ENCODE measurements at regions of chr1 and their contacts with region 1.

Region 1: DNA sequence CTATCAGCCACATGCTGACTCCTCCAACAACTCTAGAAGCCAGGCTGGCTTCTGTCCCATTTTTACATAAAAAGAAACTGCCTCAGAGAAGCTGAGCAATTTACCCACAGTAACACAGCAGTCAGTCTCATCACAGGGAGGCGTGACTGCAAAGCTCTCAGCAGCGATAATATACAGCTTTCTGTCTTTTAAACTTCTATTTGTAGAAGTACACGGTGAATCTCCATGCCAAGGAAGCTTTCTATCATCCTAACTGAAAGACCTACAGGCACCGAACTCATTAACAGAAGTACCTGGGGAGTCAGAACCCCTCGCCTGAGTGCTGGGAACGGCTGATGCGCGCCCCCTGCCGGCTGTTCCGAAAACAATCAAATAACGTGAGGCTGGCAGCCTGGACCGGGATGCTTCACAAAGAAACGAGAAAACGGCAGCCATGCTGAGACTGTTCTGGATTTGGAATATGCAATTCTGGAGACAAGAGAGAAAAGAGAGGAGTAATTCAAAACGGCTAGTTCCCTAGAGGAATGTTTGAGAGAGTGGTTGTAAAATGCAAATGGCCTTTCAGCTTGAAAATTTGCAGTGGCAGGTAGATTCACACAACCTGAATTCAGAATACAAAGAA is 43.5 kb upstream of the RAB4A start:
- DNase-seq: peak; percentile 68 to 92 (median 81)
- ATAC-seq: peak; percentile 75
- H3K4me3 ChIP-seq: no peak overlapping the region
- H3K4me3 Mint-ChIP-seq: no peak overlapping the region
- H3K27ac ChIP-seq: no peak overlapping the region
- H3K27ac Mint-ChIP-seq: no peak overlapping the region
- H3K4me1 ChIP-seq: no peaks in the 10 kb centered on the region
- H3K4me1 Mint-ChIP-seq: peaks cover 14% of the 10 kb centered on the region
- H3K27me3 ChIP-seq: no peaks in the 10 kb centered on the region
- H3K27me3 Mint-ChIP-seq: peaks cover 6% of the 10 kb centered on the region
- CTCF ChIP-seq: peak; percentile 94

Region 2: DNA sequence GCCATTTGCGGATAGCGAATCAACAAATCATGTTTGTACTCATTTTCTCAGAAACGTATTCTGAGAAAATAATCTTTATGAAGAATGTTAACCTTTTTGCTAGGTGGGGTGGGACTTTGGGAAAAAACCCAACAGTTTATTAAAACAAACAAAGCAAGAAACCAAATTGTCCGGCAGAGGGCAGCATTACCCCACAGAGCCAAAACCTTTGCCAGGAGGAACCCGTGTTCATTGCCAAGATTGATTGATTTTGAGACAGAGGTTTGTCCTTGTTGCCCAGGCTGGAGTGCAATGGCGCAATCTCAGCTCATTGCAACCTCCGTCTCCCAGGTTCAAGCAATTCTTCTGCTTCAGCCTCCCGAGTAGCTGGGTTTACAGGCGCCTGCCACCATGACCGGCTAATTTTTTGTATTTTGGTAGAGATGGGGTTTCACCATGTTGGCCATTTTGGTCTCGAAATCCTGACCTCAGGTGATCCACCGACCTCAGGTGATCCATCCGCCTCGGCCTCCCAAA is 563.0 kb before region 1 on chr1:
- CTCF ChIA-PET with region 1: interaction called, 93 read pairs
- POLR2A ChIA-PET with region 1: interaction called, 3 read pairs
- intact Hi-C with region 1: loop called (anchors 1 kb)
- DNase-seq: peak; percentile 58 to 86 (median 79)
- ATAC-seq: peak; percentile 48
- H3K4me3 ChIP-seq: no peak overlapping the region
- H3K4me3 Mint-ChIP-seq: no peak overlapping the region
- H3K27ac ChIP-seq: no peak overlapping the region
- H3K27ac Mint-ChIP-seq: no peak overlapping the region
- H3K4me1 ChIP-seq: no peaks in the 10 kb centered on the region
- H3K4me1 Mint-ChIP-seq: peaks cover 3% of the 10 kb centered on the region
- H3K27me3 ChIP-seq: no peaks in the 10 kb centered on the region
- H3K27me3 Mint-ChIP-seq: no peaks in the 10 kb centered on the region
- CTCF ChIP-seq: peak; percentile 90

Region 3: DNA sequence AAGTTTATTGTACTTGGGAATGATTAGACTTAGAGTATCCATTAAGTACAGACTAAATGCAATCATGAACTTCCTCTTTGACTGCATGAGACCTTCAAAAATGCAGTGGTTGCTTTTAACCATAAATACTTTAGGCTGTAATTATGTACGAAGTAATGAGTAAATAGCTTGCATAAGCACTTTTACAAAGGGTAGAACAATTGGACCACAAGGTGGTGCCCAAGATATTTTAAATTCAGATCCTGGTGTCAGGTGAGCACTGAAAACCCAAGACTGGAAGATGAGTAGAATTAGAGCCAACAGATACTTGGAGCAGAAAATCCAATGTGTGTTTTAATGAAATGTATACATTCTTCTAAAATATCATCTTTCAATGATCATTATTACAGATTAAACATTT is 535.5 kb before region 1 on chr1:
- CTCF ChIA-PET with region 1: interaction called, 59 read pairs
- POLR2A ChIA-PET with region 1: no interaction called
- intact Hi-C with region 1: loop called (anchors 1 kb)
- DNase-seq: peak in 3 of 9 experiments; percentile 25 to 70 (median 60)
- ATAC-seq: no peak
- H3K4me3 ChIP-seq: no peak overlapping the region
- H3K4me3 Mint-ChIP-seq: no peak overlapping the region
- H3K27ac ChIP-seq: no peak overlapping the region
- H3K27ac Mint-ChIP-seq: no peak overlapping the region
- H3K4me1 ChIP-seq: peaks cover 9% of the 10 kb centered on the region
- H3K4me1 Mint-ChIP-seq: peaks cover 10% of the 10 kb centered on the region
- H3K27me3 ChIP-seq: no peaks in the 10 kb centered on the region
- H3K27me3 Mint-ChIP-seq: peaks cover 5% of the 10 kb centered on the region
- CTCF ChIP-seq: peak; percentile 51

Region 4: DNA sequence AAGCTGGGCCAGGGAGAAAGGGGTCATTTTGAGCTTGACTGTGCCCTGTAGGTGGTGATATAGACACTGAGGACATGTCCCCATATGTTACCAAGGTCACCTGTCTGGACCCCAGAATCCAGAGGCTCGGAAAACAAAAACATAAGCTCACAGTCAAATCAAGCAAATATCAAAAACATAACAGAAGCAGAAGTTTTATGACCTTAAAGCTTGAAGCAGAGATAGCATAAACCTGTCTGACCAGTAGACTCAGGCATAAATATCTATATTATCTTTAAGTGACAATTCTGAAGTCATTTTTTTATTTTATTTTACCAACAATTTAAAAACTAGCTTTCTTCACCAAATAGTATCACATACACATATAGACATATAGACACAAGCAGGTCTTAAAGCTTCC is 525.0 kb before region 1 on chr1:
- CTCF ChIA-PET with region 1: interaction called, 16 read pairs
- POLR2A ChIA-PET with region 1: interaction called, 3 read pairs
- intact Hi-C with region 1: no loop called
- DNase-seq: no peak
- ATAC-seq: no peak
- H3K4me3 ChIP-seq: no peak overlapping the region
- H3K4me3 Mint-ChIP-seq: no peak overlapping the region
- H3K27ac ChIP-seq: no peak overlapping the region
- H3K27ac Mint-ChIP-seq: no peak overlapping the region
- H3K4me1 ChIP-seq: no peaks in the 10 kb centered on the region
- H3K4me1 Mint-ChIP-seq: no peaks in the 10 kb centered on the region
- H3K27me3 ChIP-seq: peaks cover 0 to 2% of the 10 kb centered on the region in 2 experiments
- H3K27me3 Mint-ChIP-seq: peaks cover 3% of the 10 kb centered on the region
- CTCF ChIP-seq: no peak

Region 5: DNA sequence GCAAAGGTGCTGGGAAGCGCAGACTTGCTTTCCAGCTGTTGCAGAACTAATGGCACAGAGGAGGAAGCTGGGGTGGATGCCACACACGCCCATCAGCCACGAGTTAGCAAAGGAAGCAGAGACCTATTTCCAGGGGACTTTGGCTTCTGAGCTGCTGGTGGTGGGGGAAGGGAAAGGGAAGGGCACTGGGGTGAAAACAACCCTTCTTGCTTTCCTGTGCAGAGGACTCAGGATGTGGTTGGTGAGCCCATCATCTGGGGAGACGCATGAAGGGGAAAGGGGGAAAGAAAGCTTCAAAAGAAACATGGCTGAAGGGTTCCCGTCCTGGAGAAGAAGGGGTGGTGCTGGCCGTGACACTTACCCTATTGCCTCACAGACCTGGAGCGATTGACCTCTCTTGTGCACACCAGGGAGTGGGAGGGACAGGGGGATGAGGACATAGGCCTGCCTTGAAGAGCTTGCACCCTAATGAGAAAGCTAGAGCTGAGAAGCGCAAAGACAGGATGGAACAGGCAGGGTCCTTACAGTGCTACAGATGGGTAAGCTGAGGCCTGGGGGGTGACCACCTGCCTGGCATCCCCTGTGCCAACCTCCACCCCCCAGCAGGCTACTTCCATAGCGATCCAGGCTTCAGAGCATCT is 97.3 kb before region 1 on chr1:
- CTCF ChIA-PET with region 1: interaction called, 18 read pairs
- POLR2A ChIA-PET with region 1: interaction called, 3 read pairs
- intact Hi-C with region 1: no loop called
- DNase-seq: peak in 6 of 9 experiments; percentile 15 to 69 (median 33)
- ATAC-seq: peak; percentile 41
- H3K4me3 ChIP-seq: peak overlapping the region in 1 of 2 experiments; percentile 15
- H3K4me3 Mint-ChIP-seq: peak overlapping the region; percentile 68
- H3K27ac ChIP-seq: peak overlapping the region in 1 of 2 experiments; percentile 15
- H3K27ac Mint-ChIP-seq: peak overlapping the region; percentile 62
- H3K4me1 ChIP-seq: peaks cover 41% of the 10 kb centered on the region
- H3K4me1 Mint-ChIP-seq: peaks cover 56% of the 10 kb centered on the region
- H3K27me3 ChIP-seq: no peaks in the 10 kb centered on the region
- H3K27me3 Mint-ChIP-seq: no peaks in the 10 kb centered on the region
- CTCF ChIP-seq: no peak

Region 6: DNA sequence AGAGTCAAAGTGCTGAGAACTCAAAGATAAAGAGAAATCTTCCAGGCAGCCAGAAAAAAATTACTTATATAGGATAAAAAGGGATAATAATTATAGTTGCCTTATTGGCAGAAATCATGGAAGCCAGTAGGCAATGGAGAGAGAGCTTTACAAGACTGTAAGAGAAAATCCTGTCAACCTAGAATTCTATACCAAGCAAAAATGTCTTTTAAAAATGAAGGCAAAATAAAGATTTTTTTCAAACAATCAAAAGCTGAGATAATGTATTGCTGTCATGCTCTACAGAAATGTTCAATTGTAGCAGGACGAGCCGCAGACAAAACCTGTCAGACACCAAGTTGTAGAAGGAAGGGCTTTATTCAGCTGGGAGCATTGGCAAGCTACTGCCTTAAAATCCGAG is 16.7 kb after region 1 on chr1:
- CTCF ChIA-PET with region 1: interaction called, 11 read pairs
- POLR2A ChIA-PET with region 1: no interaction called
- intact Hi-C with region 1: no loop called
- DNase-seq: no peak
- ATAC-seq: no peak
- H3K4me3 ChIP-seq: no peak overlapping the region
- H3K4me3 Mint-ChIP-seq: no peak overlapping the region
- H3K27ac ChIP-seq: no peak overlapping the region
- H3K27ac Mint-ChIP-seq: no peak overlapping the region
- H3K4me1 ChIP-seq: peaks cover 7% of the 10 kb centered on the region
- H3K4me1 Mint-ChIP-seq: peaks cover 10% of the 10 kb centered on the region
- H3K27me3 ChIP-seq: no peaks in the 10 kb centered on the region
- H3K27me3 Mint-ChIP-seq: no peaks in the 10 kb centered on the region
- CTCF ChIP-seq: no peak